ENCODE measurements at regions of chr9 and their contacts with region 1.

Region 1: GRCh38 chr9:89716559-89716958 is 111.7 kb downstream of the GADD45G start:
- H3K4me3 Mint-ChIP-seq: no peak overlapping the region
- H3K27ac Mint-ChIP-seq: peak overlapping the region; percentile 83
- H3K4me1 Mint-ChIP-seq: peaks cover 84% of the 10 kb centered on the region
- H3K27me3 Mint-ChIP-seq: no peaks in the 10 kb centered on the region

Region 2: DNA sequence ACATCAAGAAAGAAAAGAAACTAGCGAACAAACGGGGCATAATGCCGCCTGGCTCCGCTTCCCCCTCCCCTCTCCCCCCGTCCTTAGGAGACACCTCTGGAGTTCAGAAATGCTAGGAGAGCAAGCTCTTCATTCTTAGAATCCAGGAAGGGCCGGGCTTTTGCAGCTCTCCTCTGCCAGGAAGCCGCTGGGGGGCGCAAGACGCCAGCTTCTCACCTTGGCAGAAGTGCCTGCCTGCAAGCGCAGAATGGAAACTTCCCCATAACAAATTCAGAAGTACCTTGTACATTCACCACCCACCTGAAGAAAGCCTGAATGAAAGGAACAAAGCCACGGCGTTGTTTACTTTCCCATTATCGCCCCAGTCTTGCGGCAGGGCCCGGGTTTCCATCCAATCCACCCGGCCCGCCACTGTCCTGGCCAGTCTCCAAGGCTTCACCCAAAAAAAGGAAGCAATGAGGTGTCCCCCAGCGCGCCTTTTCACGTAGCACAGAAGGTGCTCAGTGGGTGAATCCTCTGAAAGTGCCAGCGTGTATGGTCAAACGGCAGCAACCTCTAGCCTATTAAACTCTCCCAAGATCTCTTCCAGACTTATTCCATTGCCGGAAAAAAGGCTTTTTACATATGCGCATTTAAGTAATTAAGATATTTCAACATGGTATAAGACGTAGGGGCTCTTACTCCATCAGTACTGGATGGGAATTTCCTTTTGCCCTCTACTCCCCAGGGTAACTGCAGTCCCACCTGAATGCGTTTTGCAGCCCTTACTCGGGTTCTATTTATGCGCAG is 113.4 kb before region 1 on chr9:
- intact Hi-C with region 1: loop called (anchors 5 kb)
- H3K4me3 Mint-ChIP-seq: peak overlapping the region; percentile 73
- H3K27ac Mint-ChIP-seq: peak overlapping the region; percentile 34
- H3K4me1 Mint-ChIP-seq: peaks cover 28% of the 10 kb centered on the region
- H3K27me3 Mint-ChIP-seq: peaks cover 11% of the 10 kb centered on the region

Region 3: GRCh38 chr9:89740722-89741121 is 24.2 kb after region 1 on chr9:
- intact Hi-C with region 1: loop called (anchors 1 kb)
- H3K4me3 Mint-ChIP-seq: no peak overlapping the region
- H3K27ac Mint-ChIP-seq: peak overlapping the region; percentile 85
- H3K4me1 Mint-ChIP-seq: peaks cover 34% of the 10 kb centered on the region
- H3K27me3 Mint-ChIP-seq: peaks cover 4% of the 10 kb centered on the region